B cell (primary cell): ENCODE measurements at regions of chr3 and their contacts with region 1.

Region 1: DNA sequence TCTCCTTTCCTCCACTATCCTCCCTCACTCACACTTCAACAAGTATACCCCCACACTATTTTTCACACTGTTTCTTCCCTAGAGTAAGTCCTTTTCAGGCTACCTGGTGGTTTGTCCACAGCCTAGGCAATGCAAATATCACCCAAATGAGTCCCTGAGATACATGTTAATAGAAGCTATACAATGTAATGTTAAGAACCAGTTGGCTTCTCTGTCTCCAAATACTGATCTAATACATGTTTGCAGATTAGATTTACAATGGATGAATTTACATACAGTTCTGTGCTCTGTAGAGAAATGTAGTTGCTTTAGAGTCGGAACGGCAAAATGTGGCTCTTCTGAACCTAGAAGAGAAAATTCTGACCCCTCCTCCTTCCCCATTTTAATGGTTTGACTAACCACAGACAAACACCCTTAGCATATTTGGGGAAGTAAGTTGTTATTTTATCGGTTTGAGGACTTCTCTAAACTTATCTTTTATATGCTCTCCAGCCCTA is 63.6 kb upstream of the MBNL1 start:
- DNase-seq: peak; percentile 87
- ATAC-seq: peak; percentile 82
- H3K4me3 ChIP-seq: peak overlapping the region; percentile 66 to 97 (median 72)
- H3K4me3 Mint-ChIP-seq: peak overlapping the region; percentile 95
- H3K27ac ChIP-seq: peak overlapping the region; percentile 83 to 92
- H3K27ac Mint-ChIP-seq: peak overlapping the region; percentile 96
- H3K4me1 ChIP-seq: peaks cover 21 to 40% of the 10 kb centered on the region in 2 donors
- H3K4me1 Mint-ChIP-seq: peaks cover 46% of the 10 kb centered on the region
- H3K27me3 ChIP-seq: no peaks in the 10 kb centered on the region
- H3K27me3 Mint-ChIP-seq: no peaks in the 10 kb centered on the region
- CTCF ChIP-seq: no peak

Region 2: GRCh38 chr3:152193673-152194267 is 11.4 kb before region 1 on chr3:
- CTCF ChIA-PET with region 1: interaction called, 6 read pairs
- POLR2A ChIA-PET with region 1: interaction called, 6 read pairs
- intact Hi-C with region 1: loop called (anchors 1 kb)
- DNase-seq: peak; percentile 57
- ATAC-seq: peak; percentile 52
- H3K4me3 ChIP-seq: peak overlapping the region; percentile 13 to 73 (median 51)
- H3K4me3 Mint-ChIP-seq: peak overlapping the region; percentile 91
- H3K27ac ChIP-seq: peak overlapping the region; percentile 27 to 59
- H3K27ac Mint-ChIP-seq: peak overlapping the region; percentile 91
- H3K4me1 ChIP-seq: peaks cover 48 to 53% of the 10 kb centered on the region in 2 donors
- H3K4me1 Mint-ChIP-seq: peaks cover 66% of the 10 kb centered on the region
- H3K27me3 ChIP-seq: no peaks in the 10 kb centered on the region
- H3K27me3 Mint-ChIP-seq: no peaks in the 10 kb centered on the region
- CTCF ChIP-seq: no peak

Region 3: DNA sequence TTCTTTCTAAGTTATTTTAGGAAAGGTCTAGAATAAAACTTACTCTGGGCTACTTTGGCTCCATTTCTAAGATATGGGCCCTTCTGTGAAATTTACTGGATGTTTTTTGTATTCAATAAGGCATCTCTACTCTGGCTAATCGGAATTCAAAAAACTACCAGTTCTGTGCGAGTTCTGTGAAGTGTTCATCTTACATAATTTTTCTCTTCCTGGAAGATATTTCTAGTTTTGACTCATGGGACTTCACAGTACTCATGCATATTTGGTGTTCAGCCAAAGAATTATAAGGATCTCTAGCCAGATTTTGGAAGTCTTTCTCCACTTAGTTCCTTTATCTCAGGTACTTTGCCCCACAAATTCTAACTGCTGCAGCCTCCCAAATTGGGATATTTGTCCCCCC is 17.2 kb after region 1 on chr3:
- CTCF ChIA-PET with region 1: interaction called, 9 read pairs
- POLR2A ChIA-PET with region 1: interaction called, 3 read pairs
- intact Hi-C with region 1: loop called (anchors 2 kb)
- DNase-seq: no peak
- ATAC-seq: no peak
- H3K4me3 ChIP-seq: no peak overlapping the region
- H3K4me3 Mint-ChIP-seq: peak overlapping the region; percentile 51
- H3K27ac ChIP-seq: peak overlapping the region in 1 of 2 donors; percentile 39
- H3K27ac Mint-ChIP-seq: peak overlapping the region; percentile 78
- H3K4me1 ChIP-seq: peaks cover 26 to 56% of the 10 kb centered on the region in 2 donors
- H3K4me1 Mint-ChIP-seq: peaks cover 59% of the 10 kb centered on the region
- H3K27me3 ChIP-seq: no peaks in the 10 kb centered on the region
- H3K27me3 Mint-ChIP-seq: no peaks in the 10 kb centered on the region
- CTCF ChIP-seq: no peak